Activated T-helper 2 cell treated with anti-CD3 and anti-CD28 coated beads, Interferon-gamma antibody, Interleukin-2, Interleukin-4, amounts not matched to agents 10 μg/mL and 5 μg/mL and 100 μg/mL, durations not matched to agents 14 hours and 24 hours and 36 hours (primary cell): ENCODE measurements at regions of chr12 and their contacts with region 1.

Region 1: DNA sequence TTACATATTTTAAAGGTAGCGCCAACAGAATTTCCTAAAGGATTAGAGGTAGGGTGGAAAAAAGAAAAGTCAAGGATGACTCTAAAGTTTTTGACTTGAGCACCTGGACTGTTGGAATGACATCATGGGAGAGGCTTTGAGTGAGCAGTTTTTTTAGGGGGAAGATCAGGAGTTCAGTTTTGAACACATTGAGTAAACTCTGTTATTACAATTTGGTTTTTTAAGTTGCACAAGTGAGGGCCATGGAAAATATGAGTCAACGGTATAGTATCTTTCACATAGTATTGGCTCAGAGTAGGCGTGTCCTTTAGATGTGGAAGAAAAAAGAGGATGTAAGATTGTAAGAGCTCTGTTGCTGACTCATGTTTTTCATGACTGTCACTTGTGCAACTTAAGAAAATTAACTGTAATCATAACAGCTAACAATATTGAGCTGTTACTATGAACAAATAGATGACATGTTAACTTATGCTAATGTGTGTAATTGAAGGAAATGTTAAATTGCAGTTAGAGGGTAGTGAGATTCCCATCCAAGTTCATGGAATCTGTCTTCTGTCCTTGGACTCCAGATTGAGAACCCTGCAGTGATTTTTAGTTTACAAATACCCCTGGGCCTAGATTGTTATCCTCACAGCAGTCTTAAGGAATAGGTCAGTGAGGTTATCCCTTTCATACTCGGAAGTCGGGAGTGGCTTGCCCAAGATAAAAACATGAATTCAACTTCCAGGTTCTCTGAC is 48.1 kb upstream of the ATP2B1 start:
- DNase-seq: peak; percentile 27
- H3K4me3 Mint-ChIP-seq: no peak overlapping the region
- H3K27ac Mint-ChIP-seq: peak overlapping the region; percentile 56
- H3K4me1 Mint-ChIP-seq: peaks cover 28% of the 10 kb centered on the region
- H3K27me3 Mint-ChIP-seq: peaks cover 2% of the 10 kb centered on the region

Region 2: DNA sequence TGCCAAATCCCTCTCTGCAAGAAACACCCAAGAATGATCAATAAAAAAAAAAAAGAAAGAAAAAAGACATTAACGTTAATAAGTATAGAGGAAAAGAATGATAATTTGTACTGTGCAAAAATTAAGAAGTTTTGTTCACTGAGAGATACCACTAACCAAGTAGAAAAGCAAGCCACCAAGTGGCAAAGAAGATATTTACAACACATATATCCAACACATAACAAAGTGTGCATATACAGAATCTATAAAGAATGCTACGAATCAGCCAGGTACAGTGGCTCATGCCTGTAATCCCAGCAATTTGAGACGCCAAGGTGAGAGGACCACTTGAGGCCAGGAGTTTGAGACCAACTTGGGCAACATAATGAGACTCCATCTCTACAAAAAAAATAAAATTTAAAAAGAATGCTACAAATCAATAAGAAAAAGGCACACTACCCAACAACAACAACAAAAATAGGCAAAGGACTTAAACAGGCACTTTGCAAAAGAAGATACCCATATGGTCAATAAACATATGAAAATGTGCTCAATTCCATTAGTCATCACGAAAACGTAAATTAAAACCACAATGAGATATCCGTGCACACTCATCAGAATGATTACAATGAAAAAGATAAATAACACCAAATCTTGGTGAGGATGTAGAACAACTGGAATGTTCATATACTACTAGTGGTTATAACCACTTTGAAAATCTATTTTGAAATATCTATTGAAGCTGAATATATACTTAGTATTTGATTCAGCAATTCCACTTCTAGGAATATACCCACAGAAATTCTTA is 252.0 kb before region 1 on chr12:
- intact Hi-C with region 1: no loop called
- DNase-seq: no peak
- H3K4me3 Mint-ChIP-seq: no peak overlapping the region
- H3K27ac Mint-ChIP-seq: no peak overlapping the region
- H3K4me1 Mint-ChIP-seq: peaks cover 14% of the 10 kb centered on the region
- H3K27me3 Mint-ChIP-seq: no peaks in the 10 kb centered on the region

Region 3: GRCh38 chr12:89539426-89540223 is 217.1 kb before region 1 on chr12:
- intact Hi-C with region 1: no loop called
- DNase-seq: no peak
- H3K4me3 Mint-ChIP-seq: no peak overlapping the region
- H3K27ac Mint-ChIP-seq: no peak overlapping the region
- H3K4me1 Mint-ChIP-seq: peaks cover 9% of the 10 kb centered on the region
- H3K27me3 Mint-ChIP-seq: no peaks in the 10 kb centered on the region

Region 4: GRCh38 chr12:89566630-89567151 is 190.1 kb before region 1 on chr12:
- intact Hi-C with region 1: loop called (anchors 2 kb)
- DNase-seq: no peak
- H3K4me3 Mint-ChIP-seq: no peak overlapping the region
- H3K27ac Mint-ChIP-seq: peak overlapping the region; percentile 56
- H3K4me1 Mint-ChIP-seq: peaks cover 42% of the 10 kb centered on the region
- H3K27me3 Mint-ChIP-seq: peaks cover 3% of the 10 kb centered on the region

Region 5: DNA sequence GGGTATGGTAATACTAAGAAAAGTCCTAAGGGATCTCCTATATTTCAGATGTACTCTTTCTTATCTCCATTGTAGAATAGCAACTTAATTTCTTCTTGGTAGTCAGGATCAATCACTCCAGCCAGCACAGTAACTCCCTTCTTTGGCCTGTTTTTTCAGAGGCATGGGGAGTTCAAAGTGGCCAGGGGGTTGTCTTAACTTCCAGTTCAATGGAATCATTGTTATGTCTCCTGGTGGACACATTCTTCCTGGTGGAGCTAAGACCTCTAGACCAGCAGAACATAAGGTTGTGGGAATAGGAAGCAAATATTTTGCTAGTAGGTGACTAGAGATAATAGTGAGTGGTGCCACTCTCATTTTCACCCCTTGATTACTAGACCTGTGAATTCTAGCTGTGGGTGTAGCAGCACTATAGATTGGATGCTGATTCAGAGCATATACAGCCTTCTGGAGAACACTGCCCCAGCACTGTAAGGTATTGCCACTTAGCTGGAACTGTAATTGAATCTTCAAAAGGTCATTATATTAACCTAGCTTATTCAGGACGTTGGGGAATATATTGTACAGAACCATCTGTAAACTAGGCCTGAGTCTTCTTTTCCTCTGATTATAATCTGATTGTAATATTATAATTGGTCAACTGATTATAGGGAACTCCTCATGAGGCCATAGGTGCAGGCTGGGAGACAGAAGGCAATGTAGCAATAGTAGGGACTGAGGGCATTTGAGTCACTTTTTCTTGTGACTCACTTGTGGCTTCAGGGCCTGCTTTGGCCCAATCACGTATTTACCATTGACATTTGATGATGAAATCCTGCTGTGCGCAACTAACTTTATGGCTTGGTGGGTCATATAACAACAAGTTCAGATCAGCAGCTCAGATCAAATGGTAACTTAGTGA is 12.1 kb after region 1 on chr12:
- intact Hi-C with region 1: loop called (anchors 1 kb)
- DNase-seq: no peak
- H3K4me3 Mint-ChIP-seq: no peak overlapping the region
- H3K27ac Mint-ChIP-seq: peak overlapping the region; percentile 49
- H3K4me1 Mint-ChIP-seq: peaks cover 28% of the 10 kb centered on the region
- H3K27me3 Mint-ChIP-seq: no peaks in the 10 kb centered on the region

Region 6: DNA sequence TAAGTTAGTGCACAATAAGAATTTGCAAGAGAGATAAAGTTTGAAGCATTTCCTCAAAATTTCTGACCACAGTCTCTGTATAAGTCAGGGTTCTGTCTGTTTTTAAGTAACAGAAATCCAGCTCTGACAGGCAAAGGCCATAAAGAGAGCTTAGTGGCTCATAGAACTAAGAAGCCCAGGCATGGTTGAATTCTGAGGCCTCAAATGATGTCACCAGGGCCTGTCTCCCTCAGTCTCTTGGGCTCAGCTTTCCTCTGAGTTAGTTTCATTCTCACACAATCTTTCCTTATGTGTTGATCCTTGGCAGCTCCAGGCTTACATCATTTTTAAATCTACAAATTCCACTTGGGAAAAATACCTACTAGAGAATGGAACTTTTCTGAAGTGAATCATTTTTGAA is 125.3 kb after region 1 on chr12:
- intact Hi-C with region 1: loop called (anchors 2 kb)
- DNase-seq: no peak
- H3K4me3 Mint-ChIP-seq: no peak overlapping the region
- H3K27ac Mint-ChIP-seq: no peak overlapping the region
- H3K4me1 Mint-ChIP-seq: peaks cover 36% of the 10 kb centered on the region
- H3K27me3 Mint-ChIP-seq: peaks cover 13% of the 10 kb centered on the region

Region 7: DNA sequence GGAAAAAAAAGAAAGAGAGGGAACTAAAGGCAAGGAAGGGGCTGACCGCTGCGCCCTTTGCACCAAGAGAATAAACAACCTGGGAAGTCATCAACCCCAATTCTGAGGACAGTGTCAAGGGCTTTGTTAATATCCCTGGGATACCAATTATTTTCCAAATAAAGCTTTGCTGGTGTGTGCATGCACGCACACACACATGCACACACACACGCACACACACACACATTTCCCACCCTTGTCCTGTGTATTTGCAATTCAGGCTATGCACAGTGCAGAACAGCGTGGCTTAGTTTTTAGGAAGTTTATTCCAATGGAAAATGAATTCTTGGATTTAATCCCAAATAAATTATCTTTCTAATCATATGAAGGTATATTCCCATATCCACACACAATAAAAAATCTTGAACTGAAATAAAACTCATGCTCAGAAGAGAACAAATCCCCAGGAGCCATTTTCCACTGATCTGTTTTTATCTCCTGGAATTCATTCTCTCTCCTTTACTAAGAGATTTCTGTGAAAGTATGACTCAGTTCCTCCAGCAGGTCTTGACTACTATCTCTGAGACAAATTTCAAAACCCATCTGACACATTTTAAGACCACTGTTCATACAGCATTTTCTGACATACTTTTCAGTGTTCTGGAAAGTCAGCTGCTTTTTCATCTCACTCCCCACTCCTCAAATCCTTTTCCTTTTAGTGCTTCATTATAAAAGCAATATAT is 286.3 kb after region 1 on chr12:
- intact Hi-C with region 1: loop called (anchors 5 kb)
- DNase-seq: no peak
- H3K4me3 Mint-ChIP-seq: no peak overlapping the region
- H3K27ac Mint-ChIP-seq: no peak overlapping the region
- H3K4me1 Mint-ChIP-seq: peaks cover 14% of the 10 kb centered on the region
- H3K27me3 Mint-ChIP-seq: no peaks in the 10 kb centered on the region

Region 8: GRCh38 chr12:90729741-90730140 is 973.0 kb after region 1 on chr12:
- intact Hi-C with region 1: no loop called
- DNase-seq: no peak
- H3K4me3 Mint-ChIP-seq: no peak overlapping the region
- H3K27ac Mint-ChIP-seq: no peak overlapping the region
- H3K4me1 Mint-ChIP-seq: no peaks in the 10 kb centered on the region
- H3K27me3 Mint-ChIP-seq: no peaks in the 10 kb centered on the region